ENCODE measurements at regions of chr20 and their contacts with region 1.

Region 1: DNA sequence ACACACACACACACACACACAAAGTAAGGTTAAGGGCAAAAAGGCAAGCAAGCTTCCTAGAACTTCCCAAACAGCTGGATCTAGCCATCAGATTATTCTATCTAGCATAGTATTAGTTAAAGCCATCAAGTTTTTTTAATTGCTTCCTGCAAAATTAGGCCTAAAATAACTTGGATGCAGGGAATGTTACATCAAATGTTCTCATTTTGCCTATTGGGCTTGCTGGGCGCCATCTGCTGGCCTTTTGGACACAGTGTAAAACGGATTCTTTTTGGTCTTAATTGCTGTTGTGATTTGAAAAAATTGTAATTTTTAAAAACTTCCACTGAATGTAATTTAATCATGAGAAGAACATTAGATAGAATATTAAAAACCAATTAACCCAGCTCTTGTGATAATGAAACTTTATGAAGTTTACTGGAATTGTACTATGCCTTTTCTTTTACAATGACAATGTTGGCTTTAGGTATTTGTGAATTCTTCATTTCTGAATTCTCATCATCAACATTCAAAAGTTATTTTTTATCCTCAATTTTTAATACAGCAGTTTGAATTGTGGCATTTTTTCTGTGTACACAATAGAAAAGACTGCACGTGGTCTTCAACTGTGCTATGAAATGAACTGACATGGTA is 6.8 kb downstream of the MKKS start:
- DNase-seq: peak; percentile 72
- H3K4me3 Mint-ChIP-seq: no peak overlapping the region
- H3K27ac Mint-ChIP-seq: peak overlapping the region; percentile 74
- H3K4me1 Mint-ChIP-seq: peaks cover 34% of the 10 kb centered on the region
- H3K27me3 Mint-ChIP-seq: no peaks in the 10 kb centered on the region
- CTCF ChIP-seq: peak; percentile 72

Region 2: GRCh38 chr20:9616833-9617489 is 810.2 kb before region 1 on chr20:
- CTCF ChIA-PET with region 1: interaction called, 72 read pairs
- POLR2A ChIA-PET with region 1: no interaction called
- intact Hi-C with region 1: loop called (anchors 1 kb)
- DNase-seq: peak; percentile 72
- H3K4me3 Mint-ChIP-seq: no peak overlapping the region
- H3K27ac Mint-ChIP-seq: no peak overlapping the region
- H3K4me1 Mint-ChIP-seq: no peaks in the 10 kb centered on the region
- H3K27me3 Mint-ChIP-seq: peaks cover 28% of the 10 kb centered on the region
- CTCF ChIP-seq: peak; percentile 93

Region 3: GRCh38 chr20:9989066-9989724 is 438.0 kb before region 1 on chr20:
- CTCF ChIA-PET with region 1: interaction called, 22 read pairs
- POLR2A ChIA-PET with region 1: interaction called, 4 read pairs
- intact Hi-C with region 1: no loop called
- DNase-seq: peak; percentile 82
- H3K4me3 Mint-ChIP-seq: peak overlapping the region; percentile 26
- H3K27ac Mint-ChIP-seq: peak overlapping the region; percentile 82
- H3K4me1 Mint-ChIP-seq: peaks cover 26% of the 10 kb centered on the region
- H3K27me3 Mint-ChIP-seq: no peaks in the 10 kb centered on the region
- CTCF ChIP-seq: no peak

Region 4: GRCh38 chr20:10079964-10080363 is 347.2 kb before region 1 on chr20:
- CTCF ChIA-PET with region 1: interaction called, 21 read pairs
- POLR2A ChIA-PET with region 1: no interaction called
- intact Hi-C with region 1: no loop called
- DNase-seq: peak; percentile 91
- H3K4me3 Mint-ChIP-seq: no peak overlapping the region
- H3K27ac Mint-ChIP-seq: no peak overlapping the region
- H3K4me1 Mint-ChIP-seq: peaks cover 41% of the 10 kb centered on the region
- H3K27me3 Mint-ChIP-seq: no peaks in the 10 kb centered on the region
- CTCF ChIP-seq: no peak

Region 5: GRCh38 chr20:10225439-10226060 is 201.6 kb before region 1 on chr20:
- CTCF ChIA-PET with region 1: interaction called, 3 read pairs
- POLR2A ChIA-PET with region 1: no interaction called
- intact Hi-C with region 1: loop called (anchors 10 kb)
- DNase-seq: no peak
- H3K4me3 Mint-ChIP-seq: no peak overlapping the region
- H3K27ac Mint-ChIP-seq: no peak overlapping the region
- H3K4me1 Mint-ChIP-seq: no peaks in the 10 kb centered on the region
- H3K27me3 Mint-ChIP-seq: peaks cover 95% of the 10 kb centered on the region
- CTCF ChIP-seq: peak; percentile 30

Region 6: DNA sequence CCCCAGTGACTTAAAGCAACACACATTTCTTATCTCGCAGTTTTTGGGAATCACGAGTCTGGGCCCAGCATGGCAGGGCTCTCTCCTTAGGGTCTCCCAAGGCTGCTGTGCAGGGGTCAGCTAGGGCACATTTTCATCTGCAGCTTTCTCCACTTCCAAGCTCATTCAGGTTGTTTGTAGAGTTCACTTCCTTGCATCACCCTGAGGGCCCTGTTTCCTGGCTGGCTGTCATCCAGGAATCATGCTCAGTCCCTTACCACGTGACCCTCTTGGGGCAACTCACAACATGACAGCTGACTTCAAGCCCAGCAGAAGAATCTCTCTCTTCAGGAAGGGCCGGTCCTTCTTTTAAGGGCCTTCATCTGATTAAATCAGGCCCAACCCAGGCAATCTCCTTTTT is 187.2 kb before region 1 on chr20:
- CTCF ChIA-PET with region 1: no interaction called
- POLR2A ChIA-PET with region 1: no interaction called
- intact Hi-C with region 1: no loop called
- DNase-seq: peak; percentile 86
- H3K4me3 Mint-ChIP-seq: no peak overlapping the region
- H3K27ac Mint-ChIP-seq: no peak overlapping the region
- H3K4me1 Mint-ChIP-seq: peaks cover 6% of the 10 kb centered on the region
- H3K27me3 Mint-ChIP-seq: no peaks in the 10 kb centered on the region
- CTCF ChIP-seq: no peak

Region 7: GRCh38 chr20:10322073-10323012 is 104.8 kb before region 1 on chr20:
- CTCF ChIA-PET with region 1: interaction called, 13 read pairs
- POLR2A ChIA-PET with region 1: no interaction called
- intact Hi-C with region 1: loop called (anchors 5 kb)
- DNase-seq: peak; percentile 41
- H3K4me3 Mint-ChIP-seq: no peak overlapping the region
- H3K27ac Mint-ChIP-seq: no peak overlapping the region
- H3K4me1 Mint-ChIP-seq: peaks cover 6% of the 10 kb centered on the region
- H3K27me3 Mint-ChIP-seq: no peaks in the 10 kb centered on the region
- CTCF ChIP-seq: no peak

Region 8: DNA sequence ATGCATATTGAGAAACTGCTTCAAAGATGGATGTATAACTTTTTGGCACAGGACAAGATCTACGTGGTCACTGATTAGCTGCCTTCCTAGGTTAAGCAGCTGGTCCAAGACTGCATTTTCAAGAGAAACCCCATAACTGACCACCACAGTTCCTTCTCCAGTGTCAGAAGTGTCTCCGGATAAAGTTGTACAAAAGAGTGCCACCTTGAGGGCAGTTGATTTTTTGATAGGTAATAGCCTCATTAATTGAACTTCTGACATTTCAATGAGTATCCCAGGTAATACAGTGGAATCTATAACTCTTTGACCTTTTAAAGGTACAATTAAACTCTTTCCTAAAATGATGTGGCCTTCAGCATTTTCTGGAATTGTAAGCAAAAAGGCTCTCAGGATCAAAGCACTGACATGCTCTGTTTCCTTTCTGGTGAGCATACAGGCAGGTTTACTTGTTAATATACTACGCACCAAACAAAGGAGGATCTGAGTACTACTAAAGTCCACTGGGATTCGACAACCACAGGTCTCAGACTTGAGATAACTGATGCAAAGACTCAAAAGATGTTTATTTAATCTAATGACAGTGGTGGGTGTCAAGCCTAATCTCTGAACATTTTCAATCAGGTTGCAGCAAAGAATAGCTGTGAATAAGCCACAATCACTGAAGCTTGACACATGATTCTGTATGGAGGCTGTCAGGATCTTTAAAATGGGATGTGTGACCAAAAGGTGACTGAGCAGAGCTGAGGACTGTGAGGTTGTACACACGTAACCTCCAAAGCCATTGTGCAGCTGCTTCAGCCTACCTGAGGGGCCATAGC is 14.4 kb before region 1 on chr20:
- CTCF ChIA-PET with region 1: interaction called, 107 read pairs
- POLR2A ChIA-PET with region 1: interaction called, 5 read pairs
- intact Hi-C with region 1: no loop called
- DNase-seq: no peak
- H3K4me3 Mint-ChIP-seq: no peak overlapping the region
- H3K27ac Mint-ChIP-seq: no peak overlapping the region
- H3K4me1 Mint-ChIP-seq: peaks cover 28% of the 10 kb centered on the region
- H3K27me3 Mint-ChIP-seq: no peaks in the 10 kb centered on the region
- CTCF ChIP-seq: no peak

Measured in MCF 10A (cell line).